Lower leg skin (tissue), 4 donors: ENCODE measurements at regions of chrX and their contacts with region 1.

Region 1: DNA sequence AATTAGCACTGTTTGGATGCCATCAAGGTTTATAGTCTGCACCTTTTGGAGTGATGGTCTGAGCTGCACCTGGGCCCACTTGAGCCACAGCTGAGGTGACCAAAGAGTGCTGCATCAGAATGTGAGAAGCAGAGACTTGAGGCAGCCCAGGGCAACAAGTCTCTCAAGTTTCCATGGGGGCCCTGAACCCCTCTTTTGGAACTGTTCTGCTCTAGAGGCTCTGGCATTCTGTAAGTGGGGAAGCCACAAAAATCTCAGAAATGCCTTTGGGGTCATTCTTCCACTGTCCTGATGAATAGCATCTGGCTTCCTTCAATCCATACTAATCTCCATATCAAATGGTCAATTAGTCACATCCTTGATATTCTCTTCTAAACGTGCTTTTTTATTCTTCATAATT is 298.4 kb upstream of the MAOA start:
- DNase-seq: no peak
- H3K4me3 ChIP-seq: no peak overlapping the region
- CTCF ChIP-seq: no peak
- POLR2A ChIP-seq: no peak

Region 2: GRCh38 chrX:41435708-41436107 is 1922.0 kb before region 1 on chrX:
- intact Hi-C with region 1: loop called (anchors 5 kb)
- DNase-seq: peak in 1 of 2 donors; percentile 26
- H3K4me3 ChIP-seq: no peak overlapping the region
- CTCF ChIP-seq: no peak
- POLR2A ChIP-seq: no peak

Region 3: DNA sequence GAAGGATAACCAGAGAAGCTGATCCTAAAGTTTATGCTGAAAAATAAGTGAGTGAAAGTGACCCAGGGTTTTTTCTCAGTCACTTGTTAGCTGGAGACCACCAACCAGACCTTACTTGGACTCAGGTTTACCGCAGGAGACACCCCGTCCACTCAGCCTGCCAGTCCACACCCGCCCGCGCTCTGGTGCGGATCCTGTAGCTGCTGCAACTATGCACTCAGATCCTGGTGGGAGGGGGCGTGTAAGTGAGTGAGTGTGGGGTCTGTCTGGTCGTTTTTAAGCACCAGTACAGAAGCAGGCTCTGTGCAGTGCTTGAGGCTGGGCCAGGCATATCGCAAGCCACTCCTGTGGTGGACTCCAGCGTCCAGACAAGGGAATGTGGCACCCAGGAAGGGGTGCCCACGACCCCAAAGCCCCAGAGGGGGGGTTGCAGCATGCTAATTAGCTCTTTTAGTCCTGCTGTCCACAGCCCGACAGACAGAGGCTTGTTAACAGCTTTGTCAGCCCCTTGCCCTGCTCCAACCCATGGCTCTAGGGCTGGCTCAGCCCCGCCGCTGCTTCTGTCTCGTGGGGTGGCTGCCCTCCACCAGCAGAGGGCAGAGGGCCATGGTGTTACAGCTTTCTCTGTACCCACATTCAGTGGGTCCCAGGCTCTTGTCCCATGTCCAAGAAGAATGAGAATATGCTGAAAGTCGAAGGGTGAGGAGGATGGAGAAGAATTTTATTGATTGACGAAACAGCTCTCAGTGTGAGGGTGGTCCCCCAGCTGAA is 539.4 kb before region 1 on chrX:
- intact Hi-C with region 1: no loop called
- DNase-seq: no peak
- H3K4me3 ChIP-seq: no peak overlapping the region
- CTCF ChIP-seq: no peak
- POLR2A ChIP-seq: no peak

Region 4: DNA sequence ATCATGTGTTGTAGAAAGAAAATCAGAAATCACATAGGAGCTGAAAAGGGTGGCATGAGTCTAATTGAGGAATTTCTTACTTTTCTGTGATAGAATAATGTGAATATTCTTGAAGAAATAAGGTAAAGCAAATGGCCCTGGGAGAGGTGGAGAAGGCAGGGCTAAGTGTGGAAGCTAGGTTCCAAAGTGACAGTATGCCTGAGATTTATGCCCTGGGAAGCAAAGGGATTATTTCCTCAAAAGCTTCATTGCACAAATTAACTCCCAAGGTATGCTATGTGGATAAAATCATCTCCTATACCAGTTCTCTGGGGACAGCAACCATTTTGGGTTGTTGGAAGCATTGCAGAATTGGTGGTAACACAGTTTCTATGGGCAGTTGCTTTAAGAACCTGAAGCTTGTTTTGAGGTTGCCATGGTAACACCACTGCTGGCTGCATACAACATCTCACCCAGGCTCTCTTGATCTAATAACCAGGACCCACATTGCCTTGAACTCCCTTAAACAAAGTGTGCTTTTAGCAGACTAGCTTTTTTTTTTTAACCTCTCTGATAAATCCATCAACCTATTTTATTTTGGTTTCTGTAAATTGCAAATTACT is 319.3 kb after region 1 on chrX:
- intact Hi-C with region 1: no loop called
- DNase-seq: no peak
- H3K4me3 ChIP-seq: no peak overlapping the region
- CTCF ChIP-seq: no peak
- POLR2A ChIP-seq: no peak